ENCODE measurements at regions of chr4 and their contacts with region 1.

Region 1: GRCh38 chr4:54440394-54441136 is 211.5 kb downstream of the PDGFRA start:
- DNase-seq: no peak
- ATAC-seq: no peak
- H3K4me3 Mint-ChIP-seq: no peak overlapping the region
- H3K27ac Mint-ChIP-seq: no peak overlapping the region
- H3K4me1 Mint-ChIP-seq: no peaks in the 10 kb centered on the region
- H3K27me3 Mint-ChIP-seq: peaks cover 21% of the 10 kb centered on the region

Region 2: DNA sequence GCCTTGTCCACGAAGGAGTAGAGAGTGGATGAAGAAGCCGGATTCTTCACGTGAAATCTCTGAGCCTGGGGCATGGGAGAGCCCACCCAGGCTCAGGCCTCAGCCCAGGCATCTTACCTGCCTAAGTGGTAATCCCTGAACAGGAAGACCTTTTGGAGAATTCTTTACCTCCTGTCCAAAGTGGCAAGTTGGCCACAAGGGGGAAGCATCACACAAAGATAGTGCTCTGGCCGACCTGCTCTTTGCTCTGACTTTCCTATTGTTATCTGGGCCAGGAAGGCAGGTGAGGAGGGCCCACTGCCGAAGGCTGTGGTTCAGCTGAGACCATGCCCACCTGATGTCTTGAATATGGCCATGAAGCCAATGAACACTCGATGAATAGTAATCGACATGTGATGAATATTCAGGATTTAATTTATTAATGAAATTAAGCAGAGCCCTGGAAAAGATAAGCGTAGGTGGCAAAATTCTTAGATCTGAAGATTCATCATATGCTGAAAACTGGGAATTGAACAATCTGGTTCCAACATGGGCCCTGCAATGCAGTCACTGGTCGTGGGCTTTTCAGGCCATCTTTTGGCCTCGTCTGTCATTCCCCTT is 117.6 kb before region 1 on chr4:
- CTCF ChIA-PET with region 1: interaction called, 19 read pairs
- POLR2A ChIA-PET with region 1: no interaction called
- DNase-seq: peak; percentile 67
- ATAC-seq: peak; percentile 60
- H3K4me3 Mint-ChIP-seq: no peak overlapping the region
- H3K27ac Mint-ChIP-seq: no peak overlapping the region
- H3K4me1 Mint-ChIP-seq: no peaks in the 10 kb centered on the region
- H3K27me3 Mint-ChIP-seq: no peaks in the 10 kb centered on the region

Region 3: GRCh38 chr4:54568184-54568583 is 127.6 kb after region 1 on chr4:
- CTCF ChIA-PET with region 1: no interaction called
- POLR2A ChIA-PET with region 1: no interaction called
- DNase-seq: no peak
- ATAC-seq: no peak
- H3K4me3 Mint-ChIP-seq: no peak overlapping the region
- H3K27ac Mint-ChIP-seq: no peak overlapping the region
- H3K4me1 Mint-ChIP-seq: peaks cover 8% of the 10 kb centered on the region
- H3K27me3 Mint-ChIP-seq: peaks cover 2% of the 10 kb centered on the region

Measured in activated CD8-positive, alpha-beta T cell treated with anti-CD3 and anti-CD28 coated beads, Interleukin-2, amount 10 ng/mL, durations not matched to agents 7 days and 5 days (primary cell).